ENCODE measurements at regions of chr1 and their contacts with region 1.

Region 1: DNA sequence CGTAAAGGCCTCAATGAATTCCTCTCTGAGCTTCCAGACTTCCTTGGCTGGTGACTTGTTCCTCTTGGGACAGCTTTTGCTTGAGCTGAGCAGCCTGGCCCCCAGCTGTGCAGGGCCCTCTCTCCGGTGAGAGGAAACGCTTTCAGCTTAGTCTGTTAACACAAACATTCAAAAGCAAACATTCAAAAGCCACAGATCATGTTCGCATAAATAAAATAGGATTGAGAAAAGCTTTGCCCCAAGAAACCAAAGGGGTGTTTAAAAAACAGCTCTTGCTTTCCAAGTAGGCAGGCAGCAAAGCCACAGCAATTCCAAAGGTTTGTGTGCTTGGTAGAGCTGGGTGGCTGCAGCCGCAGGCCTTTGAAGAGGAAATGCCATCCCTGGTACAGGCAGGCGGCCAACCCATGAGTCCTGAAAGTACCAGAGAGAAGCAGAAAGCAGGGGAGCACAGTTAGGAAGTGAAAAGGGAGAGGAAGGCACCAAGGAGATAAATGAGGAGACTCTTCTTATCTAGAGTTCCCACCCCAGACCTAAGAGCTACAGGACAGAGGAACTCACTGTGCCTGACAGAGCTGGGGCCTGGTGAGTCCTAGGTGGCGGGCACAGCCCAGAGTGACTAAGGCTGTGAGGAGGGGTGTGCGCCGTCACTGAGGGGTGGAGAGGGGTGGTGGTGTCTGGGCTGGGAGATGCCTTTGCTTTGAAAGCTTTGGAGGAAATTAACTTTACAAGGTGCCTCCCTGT is 48.4 kb downstream of the CCN1 start:
- DNase-seq: peak in 1 of 2 experiments; percentile 70
- H3K4me3 ChIP-seq: no peak overlapping the region
- H3K27ac ChIP-seq: no peak overlapping the region
- H3K4me1 ChIP-seq: no peaks in the 10 kb centered on the region
- H3K27me3 ChIP-seq: no peaks in the 10 kb centered on the region
- CTCF ChIP-seq: no peak

Region 2: DNA sequence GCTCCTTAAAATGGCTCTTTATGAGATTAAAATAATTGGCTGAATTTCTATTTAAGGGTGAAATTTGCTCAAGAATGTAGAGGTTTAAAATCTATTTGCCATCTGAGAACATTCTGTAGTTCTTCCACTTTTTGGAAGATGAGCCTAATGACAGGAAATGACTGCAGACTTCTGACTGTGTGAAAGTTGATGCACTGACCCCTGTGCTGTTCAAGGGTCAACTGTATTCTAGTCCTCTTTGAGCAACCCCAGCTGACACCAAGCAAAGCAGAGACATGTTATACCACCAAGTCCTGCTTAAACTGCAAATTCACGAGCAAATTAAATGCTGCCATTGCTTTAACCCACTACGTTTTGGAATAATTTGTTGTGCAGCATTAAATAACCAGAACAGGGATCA is 190.6 kb before region 1 on chr1:
- CTCF ChIA-PET with region 1: no interaction called
- POLR2A ChIA-PET with region 1: interaction called, 10 read pairs
- intact Hi-C with region 1: no loop called
- DNase-seq: no peak
- H3K4me3 ChIP-seq: no peak overlapping the region
- H3K27ac ChIP-seq: no peak overlapping the region
- H3K4me1 ChIP-seq: peaks cover 8% of the 10 kb centered on the region
- H3K27me3 ChIP-seq: no peaks in the 10 kb centered on the region
- CTCF ChIP-seq: no peak

Region 3: GRCh38 chr1:85612704-85613361 is 16.1 kb before region 1 on chr1:
- CTCF ChIA-PET with region 1: no interaction called
- POLR2A ChIA-PET with region 1: no interaction called
- intact Hi-C with region 1: loop called (anchors 1 kb)
- DNase-seq: peak; percentile 60 to 98
- H3K4me3 ChIP-seq: peak overlapping the region; percentile 12; the same call in 1 of the 2 replicates
- H3K27ac ChIP-seq: peak overlapping the region; percentile 91
- H3K4me1 ChIP-seq: peaks cover 48% of the 10 kb centered on the region
- H3K27me3 ChIP-seq: no peaks in the 10 kb centered on the region
- CTCF ChIP-seq: peak; percentile 65

Measured in PC-9 (cell line).